Ascending aorta (tissue), 2 donors: ENCODE measurements at regions of chr6 and their contacts with region 1.

Region 1: DNA sequence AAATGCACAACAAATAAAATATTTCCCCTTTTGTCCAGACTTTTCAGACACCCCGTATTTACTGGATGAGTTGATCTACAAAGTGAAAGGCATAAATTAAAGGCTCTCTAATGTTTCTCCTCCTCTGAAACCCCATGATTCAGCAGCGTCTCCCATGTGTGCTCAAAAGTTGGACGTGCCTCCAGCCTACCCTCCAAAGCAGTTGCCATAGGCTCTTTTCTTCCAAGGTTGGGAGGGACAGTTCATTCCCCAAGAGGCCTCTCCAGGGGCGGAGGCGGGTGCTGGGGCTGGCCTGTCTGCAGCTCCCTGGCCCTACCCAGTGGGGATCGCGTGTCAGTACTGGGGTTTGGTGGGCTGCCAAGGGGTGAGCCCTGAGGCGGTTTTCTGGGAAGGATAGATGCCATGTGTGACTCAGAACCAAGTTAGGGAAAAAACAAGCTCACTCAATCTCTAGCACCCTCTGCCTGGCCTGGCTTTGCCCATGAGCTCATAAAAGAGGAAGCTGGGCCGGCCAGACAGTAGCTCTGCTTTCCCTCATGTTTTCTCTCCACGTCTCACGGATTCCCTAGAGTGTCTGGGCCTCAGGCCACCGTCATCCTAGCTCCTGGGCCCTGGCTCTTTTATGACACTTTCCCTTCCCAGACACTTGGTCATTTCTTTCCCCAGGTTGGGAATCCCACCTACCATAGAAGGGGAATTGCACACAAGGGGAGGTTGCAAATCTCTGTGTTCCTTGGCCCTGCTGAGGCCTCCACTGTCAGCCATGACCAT is 8.0 kb upstream of the IER3 start:
- DNase-seq: peak; percentile 95 to 99
- H3K4me3 ChIP-seq: peak overlapping the region in 1 of 2 donors; percentile 2
- H3K27ac ChIP-seq: peak overlapping the region; percentile 91 to 92
- H3K4me1 ChIP-seq: peaks cover 18 to 28% of the 10 kb centered on the region in 2 donors
- H3K27me3 ChIP-seq: no peaks in the 10 kb centered on the region
- CTCF ChIP-seq: no peak

Region 2: DNA sequence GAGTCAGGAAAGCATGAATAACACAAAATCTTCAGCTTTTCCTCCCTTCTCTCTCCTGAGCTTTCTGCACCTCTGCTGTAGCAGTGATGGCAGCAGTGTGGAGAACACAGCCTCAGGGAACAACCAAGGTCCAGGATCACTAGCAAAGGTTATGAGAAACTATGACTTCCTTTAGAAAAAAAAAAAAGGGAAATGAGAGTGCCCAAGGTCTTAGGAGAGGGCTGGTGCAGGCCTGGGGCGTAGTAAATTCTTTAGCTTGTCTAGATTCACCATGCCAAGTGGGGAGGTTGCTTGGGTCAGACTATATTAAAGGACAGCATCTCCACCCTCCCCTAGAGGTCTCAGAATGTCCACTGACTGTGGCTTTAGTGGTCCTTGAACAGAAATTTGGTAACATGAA is 731.7 kb before region 1 on chr6:
- intact Hi-C with region 1: no loop called
- DNase-seq: no peak
- H3K4me3 ChIP-seq: no peak overlapping the region
- H3K27ac ChIP-seq: no peak overlapping the region
- H3K4me1 ChIP-seq: no peaks in the 10 kb centered on the region
- H3K27me3 ChIP-seq: no peaks in the 10 kb centered on the region
- CTCF ChIP-seq: no peak

Region 3: DNA sequence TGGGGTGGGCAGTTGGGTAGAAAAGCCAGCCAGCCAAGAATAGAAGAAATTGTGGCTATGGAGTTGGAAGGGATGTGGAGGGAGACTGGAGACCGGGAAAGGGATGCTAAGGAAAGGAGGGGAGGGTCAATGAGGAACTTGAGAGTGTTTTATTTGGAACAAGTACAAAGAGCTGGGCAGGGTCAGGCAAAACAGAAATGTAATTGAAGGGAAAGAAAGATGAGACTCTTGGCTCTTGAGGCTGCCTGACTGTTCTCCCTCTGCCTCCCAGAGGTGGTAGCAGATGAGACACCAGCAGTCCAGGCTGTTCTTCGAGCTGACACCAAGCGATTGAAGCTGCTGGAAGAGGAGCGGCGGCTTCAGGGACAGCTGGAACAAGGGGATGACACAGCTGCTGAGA is 168.4 kb before region 1 on chr6:
- intact Hi-C with region 1: no loop called
- DNase-seq: no peak
- H3K4me3 ChIP-seq: no peak overlapping the region
- H3K27ac ChIP-seq: no peak overlapping the region
- H3K4me1 ChIP-seq: no peaks in the 10 kb centered on the region
- H3K27me3 ChIP-seq: no peaks in the 10 kb centered on the region
- CTCF ChIP-seq: no peak

Region 4: GRCh38 chr6:30769088-30769852 is 16.9 kb after region 1 on chr6:
- intact Hi-C with region 1: loop called (anchors 1 kb)
- DNase-seq: peak; percentile 63 to 86
- H3K4me3 ChIP-seq: no peak overlapping the region
- H3K27ac ChIP-seq: peak overlapping the region; percentile 42 to 73
- H3K4me1 ChIP-seq: peaks cover 7 to 10% of the 10 kb centered on the region in 2 donors
- H3K27me3 ChIP-seq: no peaks in the 10 kb centered on the region
- CTCF ChIP-seq: no peak

Region 5: GRCh38 chr6:30781743-30782424 is 29.5 kb after region 1 on chr6:
- intact Hi-C with region 1: loop called (anchors 1 kb)
- DNase-seq: peak; percentile 83 to 98
- H3K4me3 ChIP-seq: peak overlapping the region in 1 of 2 donors; percentile 2
- H3K27ac ChIP-seq: peak overlapping the region; percentile 90 to 94
- H3K4me1 ChIP-seq: peaks cover 13 to 45% of the 10 kb centered on the region in 2 donors
- H3K27me3 ChIP-seq: no peaks in the 10 kb centered on the region
- CTCF ChIP-seq: no peak